ENCODE measurements at regions of chr4 and their contacts with region 1.

Region 1: GRCh38 chr4:166091912-166092510 is 219.0 kb downstream of the TLL1 start:
- DNase-seq: no peak
- H3K4me3 ChIP-seq: no peak overlapping the region
- H3K4me3 Mint-ChIP-seq: no peak overlapping the region
- H3K27ac Mint-ChIP-seq: no peak overlapping the region
- H3K4me1 ChIP-seq: no peaks in the 10 kb centered on the region
- H3K4me1 Mint-ChIP-seq: peaks cover 8% of the 10 kb centered on the region
- H3K27me3 ChIP-seq: no peaks in the 10 kb centered on the region
- H3K27me3 Mint-ChIP-seq: no peaks in the 10 kb centered on the region
- CTCF ChIP-seq: peak; percentile 46 to 61

Region 2: DNA sequence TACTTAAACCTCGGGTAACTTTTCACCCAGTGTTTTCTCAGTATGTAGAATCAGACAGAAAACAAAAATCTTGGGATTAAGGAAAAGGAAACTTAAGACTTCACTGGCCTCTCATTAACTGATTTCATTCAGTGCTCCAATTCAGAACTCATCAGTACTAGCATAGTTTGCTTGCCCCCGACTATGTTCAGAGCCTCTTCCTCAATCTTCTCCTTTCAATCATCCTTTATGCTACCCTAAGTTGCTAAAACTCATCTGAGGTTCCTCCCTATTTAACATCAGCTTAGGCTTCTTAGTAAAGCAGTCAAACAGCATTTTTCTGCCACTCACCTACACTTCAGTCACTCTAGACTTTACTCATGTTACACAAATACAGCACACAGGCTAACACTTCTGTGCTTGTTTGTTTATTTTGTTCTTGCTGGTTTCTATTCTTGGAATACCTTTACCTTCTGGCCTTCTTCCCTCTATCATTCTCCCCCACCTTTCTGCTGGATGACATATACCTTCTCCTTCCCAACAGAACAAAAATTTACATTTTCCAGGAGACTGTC is 382.0 kb before region 1 on chr4:
- CTCF ChIA-PET with region 1: no interaction called
- POLR2A ChIA-PET with region 1: no interaction called
- intact Hi-C with region 1: loop called (anchors 10 kb)
- DNase-seq: peak in 1 of 2 experiments; percentile 19
- H3K4me3 ChIP-seq: no peak overlapping the region
- H3K4me3 Mint-ChIP-seq: peak overlapping the region; percentile 0
- H3K27ac Mint-ChIP-seq: peak overlapping the region; percentile 5
- H3K4me1 ChIP-seq: peaks cover 7% of the 10 kb centered on the region
- H3K4me1 Mint-ChIP-seq: peaks cover 23% of the 10 kb centered on the region
- H3K27me3 ChIP-seq: no peaks in the 10 kb centered on the region
- H3K27me3 Mint-ChIP-seq: no peaks in the 10 kb centered on the region
- CTCF ChIP-seq: no peak

Region 3: DNA sequence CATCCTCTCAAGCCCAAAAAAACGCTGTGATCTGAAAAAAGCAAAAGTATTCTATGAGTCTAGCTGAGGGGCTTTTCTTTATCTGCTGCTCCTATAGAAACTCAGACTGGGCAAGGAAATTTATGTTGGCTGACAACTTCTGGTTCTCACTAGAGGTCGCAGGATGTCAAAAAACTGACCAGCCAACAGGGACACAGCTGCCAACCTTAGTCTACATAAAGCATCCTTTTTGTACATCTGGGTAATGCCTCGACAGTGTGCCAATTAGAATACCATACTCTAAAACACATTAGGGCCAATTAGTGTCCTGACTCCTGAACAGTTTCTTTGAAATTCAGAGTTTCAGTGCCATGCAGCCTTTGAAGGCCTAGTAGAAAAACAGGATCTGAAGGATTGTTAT is 227.7 kb before region 1 on chr4:
- CTCF ChIA-PET with region 1: interaction called, 5 read pairs
- POLR2A ChIA-PET with region 1: no interaction called
- intact Hi-C with region 1: loop called (anchors 1 kb)
- DNase-seq: peak in 1 of 2 experiments; percentile 25
- H3K4me3 ChIP-seq: no peak overlapping the region
- H3K4me3 Mint-ChIP-seq: no peak overlapping the region
- H3K27ac Mint-ChIP-seq: no peak overlapping the region
- H3K4me1 ChIP-seq: no peaks in the 10 kb centered on the region
- H3K4me1 Mint-ChIP-seq: peaks cover 7% of the 10 kb centered on the region
- H3K27me3 ChIP-seq: no peaks in the 10 kb centered on the region
- H3K27me3 Mint-ChIP-seq: no peaks in the 10 kb centered on the region
- CTCF ChIP-seq: peak in 1 of 2 experiments; percentile 35

Region 4: GRCh38 chr4:165945991-165946390 is 146.0 kb before region 1 on chr4:
- CTCF ChIA-PET with region 1: no interaction called
- POLR2A ChIA-PET with region 1: no interaction called
- intact Hi-C with region 1: no loop called
- DNase-seq: no peak
- H3K4me3 ChIP-seq: no peak overlapping the region
- H3K4me3 Mint-ChIP-seq: no peak overlapping the region
- H3K27ac Mint-ChIP-seq: no peak overlapping the region
- H3K4me1 ChIP-seq: no peaks in the 10 kb centered on the region
- H3K4me1 Mint-ChIP-seq: peaks cover 6% of the 10 kb centered on the region
- H3K27me3 ChIP-seq: no peaks in the 10 kb centered on the region
- H3K27me3 Mint-ChIP-seq: no peaks in the 10 kb centered on the region
- CTCF ChIP-seq: no peak